SK-N-SH (cell line): ENCODE measurements at regions of chr17 and their contacts with region 1.

Region 1: GRCh38 chr17:16363749-16364536 is 10.7 kb upstream of the CENPV start:
- DNase-seq: peak; percentile 74
- H3K4me3 ChIP-seq: no peak overlapping the region; a peak in 1 of 4 replicates
- H3K27ac ChIP-seq: no peak overlapping the region
- H3K4me1 ChIP-seq: peaks cover 0 to 6% of the 10 kb centered on the region in 2 experiments; a peak in 1 of 4 replicates
- H3K27me3 ChIP-seq: no peaks in the 10 kb centered on the region
- CTCF ChIP-seq: peak; percentile 97
- EP300 ChIP-seq: 0 out of 4 replicates have a peak, but pooled peaks of 1 of the 2 experiments have one; percentile 17
- RAD21 ChIP-seq: peak; percentile 75

Region 2: DNA sequence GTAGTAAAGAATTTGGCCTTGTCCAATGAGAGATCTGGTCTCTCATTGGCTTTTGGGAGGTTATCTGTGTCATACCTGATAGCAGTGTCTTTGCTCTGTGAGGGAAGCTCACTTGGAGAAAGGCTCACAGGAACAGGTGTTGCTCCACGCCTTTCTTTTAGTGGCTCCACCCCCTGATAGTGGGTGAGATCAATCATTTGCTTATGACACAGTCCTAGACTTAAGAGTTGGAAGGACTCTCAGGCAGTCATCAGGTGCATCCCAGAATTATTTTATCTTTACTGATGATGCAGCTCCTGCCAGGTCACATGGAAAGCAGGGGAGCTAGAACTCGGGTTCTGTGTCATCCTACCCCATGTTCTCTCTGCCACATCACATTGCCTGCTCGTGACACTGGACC is 70.0 kb before region 1 on chr17:
- CTCF ChIA-PET with region 1: no interaction called
- POLR2A ChIA-PET with region 1: no interaction called
- DNase-seq: no peak
- H3K4me3 ChIP-seq: no peak overlapping the region
- H3K27ac ChIP-seq: no peak overlapping the region
- H3K4me1 ChIP-seq: peaks cover 0 to 6% of the 10 kb centered on the region in 2 experiments; a peak in 2 of 4 replicates
- H3K27me3 ChIP-seq: no peaks in the 10 kb centered on the region
- CTCF ChIP-seq: no peak
- EP300 ChIP-seq: no peak
- RAD21 ChIP-seq: no peak

Region 3: DNA sequence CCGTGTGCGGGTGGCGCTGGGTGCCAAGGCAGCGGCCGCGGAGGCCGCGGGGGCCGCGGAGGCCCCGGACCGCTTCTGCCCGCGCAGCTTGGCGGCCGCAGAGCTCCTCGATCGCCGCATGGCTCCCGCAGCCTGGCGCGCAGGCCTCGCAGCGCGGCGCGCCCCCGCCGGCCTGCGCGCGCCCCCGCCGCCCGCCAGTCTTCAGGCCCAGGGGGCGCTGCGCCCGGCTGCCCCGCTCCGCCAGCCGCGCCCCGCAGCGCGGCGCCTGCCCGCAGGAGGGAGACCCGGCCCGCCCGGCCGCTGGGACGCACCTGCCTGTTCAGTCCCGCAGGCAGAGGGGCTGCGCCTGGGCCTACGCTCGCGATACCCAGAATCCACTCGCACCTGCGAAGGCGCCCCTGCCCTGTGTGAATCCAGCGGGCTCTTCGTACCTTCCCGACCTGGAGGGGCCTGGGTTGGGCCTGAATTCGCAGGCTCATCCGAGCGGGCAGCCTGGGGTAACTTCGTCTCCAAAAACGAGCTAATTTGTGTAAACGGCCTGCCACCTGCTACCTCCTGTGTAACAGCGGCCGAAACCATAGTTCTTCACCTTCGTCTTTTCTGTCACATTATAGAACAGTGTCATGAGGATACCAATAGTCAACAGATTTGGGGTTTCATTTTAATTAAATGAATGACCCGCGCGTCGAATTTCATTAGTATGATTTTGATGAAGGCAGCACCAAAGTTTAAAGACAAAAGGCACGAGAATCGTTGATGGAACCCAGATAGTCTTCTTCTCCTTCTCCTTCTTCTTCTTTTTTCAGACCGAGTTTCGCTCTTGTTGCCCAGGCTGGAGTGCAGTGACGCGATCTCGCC is 10.4 kb before region 1 on chr17 and contains the start of gene CENPV:
- CTCF ChIA-PET with region 1: interaction called, 94 read pairs
- POLR2A ChIA-PET with region 1: interaction called, 13 read pairs
- DNase-seq: peak; percentile 95
- H3K4me3 ChIP-seq: peak within 1 kb of the TSS; percentile 65 to 84
- H3K27ac ChIP-seq: peak within 1 kb of the TSS; percentile 79 to 80
- H3K4me1 ChIP-seq: no peaks in the 10 kb centered on the region; a peak in 2 of 4 replicates
- H3K27me3 ChIP-seq: no peaks in the 10 kb centered on the region
- CTCF ChIP-seq: peak; percentile 19
- EP300 ChIP-seq: no peak
- RAD21 ChIP-seq: no peak
- polyA plus RNA-seq, gene CENPV: 92.3 and 97.7 TPM in 2 replicates

Region 4: GRCh38 chr17:16380640-16381495 is 16.9 kb after region 1 on chr17 and contains the start of gene UBB:
- CTCF ChIA-PET with region 1: interaction called, 56 read pairs
- POLR2A ChIA-PET with region 1: interaction called, 17 read pairs
- DNase-seq: peak; percentile 95
- H3K4me3 ChIP-seq: peak within 1 kb of the TSS; percentile 78 to 99
- H3K27ac ChIP-seq: peak within 1 kb of the TSS; percentile 94 to 97
- H3K4me1 ChIP-seq: peaks cover 4 to 15% of the 10 kb centered on the region in 2 experiments; a peak in 2 of 4 replicates
- H3K27me3 ChIP-seq: no peaks in the 10 kb centered on the region
- CTCF ChIP-seq: peak; percentile 12; the same call in 1 of the 2 replicates
- EP300 ChIP-seq: peak; percentile 33 to 85; a peak in 3 of 4 replicates
- RAD21 ChIP-seq: no peak
- polyA plus RNA-seq, gene UBB: 2,465 and 2,693 TPM in 2 replicates

Region 5: DNA sequence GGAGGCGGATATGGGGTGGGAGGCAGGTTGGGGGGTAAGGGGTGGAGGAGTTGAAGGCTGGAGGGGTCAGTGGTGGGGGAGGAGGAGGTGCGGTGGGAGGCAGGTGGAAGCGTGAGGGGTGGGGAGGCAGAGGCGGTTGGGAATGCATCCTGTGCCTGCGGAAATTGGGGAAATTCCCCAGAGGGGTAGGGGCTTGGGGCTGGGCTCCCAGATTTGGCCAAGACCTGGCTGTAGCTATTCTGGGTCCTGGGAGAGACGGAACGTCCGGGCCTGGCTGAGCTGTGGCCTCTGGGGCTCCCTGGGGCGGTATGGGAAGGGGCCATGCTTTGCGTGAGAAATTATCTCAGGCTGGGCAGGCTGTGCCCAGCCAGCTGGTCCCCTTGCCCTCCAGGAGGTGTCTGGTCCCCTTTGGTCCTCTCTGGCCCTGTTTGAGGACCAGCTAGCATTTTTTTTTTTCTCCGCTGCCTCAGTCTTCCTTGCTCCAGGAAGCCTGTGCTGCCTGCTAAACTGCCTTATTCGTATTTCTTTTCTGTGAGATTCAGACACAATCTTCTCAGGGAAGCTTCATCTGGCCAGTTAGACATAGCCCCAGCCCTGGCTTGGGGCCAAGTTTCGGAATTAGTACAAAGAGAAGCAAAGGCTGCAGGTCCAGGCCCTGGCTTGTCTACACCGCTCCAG is 44.1 kb after region 1 on chr17:
- CTCF ChIA-PET with region 1: interaction called, 10 read pairs
- POLR2A ChIA-PET with region 1: no interaction called
- DNase-seq: peak; percentile 76
- H3K4me3 ChIP-seq: peak overlapping the region in 1 of 2 experiments; percentile 20; a peak in 1 of 4 replicates
- H3K27ac ChIP-seq: peak overlapping the region; percentile 54 to 82
- H3K4me1 ChIP-seq: peaks cover 0 to 11% of the 10 kb centered on the region in 2 experiments; a peak in 1 of 4 replicates
- H3K27me3 ChIP-seq: no peaks in the 10 kb centered on the region
- CTCF ChIP-seq: no peak
- EP300 ChIP-seq: no peak
- RAD21 ChIP-seq: no peak

Region 6: GRCh38 chr17:16446338-16446983 is 82.5 kb after region 1 on chr17:
- CTCF ChIA-PET with region 1: interaction called, 23 read pairs
- POLR2A ChIA-PET with region 1: no interaction called
- DNase-seq: no peak
- H3K4me3 ChIP-seq: no peak overlapping the region
- H3K27ac ChIP-seq: no peak overlapping the region; a peak in 1 of 4 replicates
- H3K4me1 ChIP-seq: peaks cover 13 to 20% of the 10 kb centered on the region in 2 experiments; a peak in 3 of 4 replicates
- H3K27me3 ChIP-seq: no peaks in the 10 kb centered on the region
- CTCF ChIP-seq: no peak
- EP300 ChIP-seq: no peak
- RAD21 ChIP-seq: no peak